ENCODE measurements at regions of chr3 and their contacts with region 1.

Region 1: DNA sequence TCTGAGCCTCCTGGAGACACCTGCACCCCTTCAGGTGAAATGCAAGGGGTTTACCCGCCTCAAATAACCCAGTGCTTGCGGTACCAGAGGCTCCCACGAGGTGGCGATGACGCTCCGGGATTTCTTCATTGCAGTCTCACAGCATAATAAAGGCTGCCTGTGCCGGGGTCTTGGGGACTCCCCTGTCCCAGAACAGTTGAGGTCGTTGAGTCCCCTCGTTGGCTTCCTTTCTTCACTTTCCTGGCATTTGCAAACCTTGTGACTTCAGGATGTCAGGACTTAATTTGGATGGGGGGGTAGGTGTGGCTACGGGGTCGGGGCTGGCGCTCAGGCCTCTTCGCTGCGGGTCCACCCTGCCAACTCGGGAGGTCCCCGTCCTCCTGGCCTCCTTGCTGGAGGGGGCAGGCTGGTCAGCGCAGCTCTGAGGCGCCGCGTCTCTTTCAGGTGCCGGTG is 1.3 kb downstream of the GNAT1 start:
- DNase-seq: peak; percentile 60
- H3K4me3 ChIP-seq: no peak overlapping the region
- H3K27ac ChIP-seq: no peak overlapping the region
- H3K4me1 ChIP-seq: peaks cover 27% of the 10 kb centered on the region
- H3K27me3 ChIP-seq: peaks cover 51% of the 10 kb centered on the region
- CTCF ChIP-seq: peak; percentile 91

Region 2: GRCh38 chr3:50068134-50068533 is 124.6 kb before region 1 on chr3:
- intact Hi-C with region 1: no loop called
- DNase-seq: no peak
- H3K4me3 ChIP-seq: no peak overlapping the region
- H3K27ac ChIP-seq: no peak overlapping the region
- H3K4me1 ChIP-seq: no peaks in the 10 kb centered on the region
- H3K27me3 ChIP-seq: no peaks in the 10 kb centered on the region
- CTCF ChIP-seq: no peak

Region 3: GRCh38 chr3:50121416-50122032 is 71.2 kb before region 1 on chr3:
- intact Hi-C with region 1: loop called (anchors 1 kb)
- DNase-seq: peak; percentile 70
- H3K4me3 ChIP-seq: no peak overlapping the region
- H3K27ac ChIP-seq: no peak overlapping the region
- H3K4me1 ChIP-seq: peaks cover 24% of the 10 kb centered on the region
- H3K27me3 ChIP-seq: no peaks in the 10 kb centered on the region
- CTCF ChIP-seq: peak; percentile 84

Region 4: GRCh38 chr3:50132421-50133282 is 60.1 kb before region 1 on chr3:
- intact Hi-C with region 1: no loop called
- DNase-seq: no peak
- H3K4me3 ChIP-seq: no peak overlapping the region
- H3K27ac ChIP-seq: no peak overlapping the region
- H3K4me1 ChIP-seq: peaks cover 11% of the 10 kb centered on the region
- H3K27me3 ChIP-seq: no peaks in the 10 kb centered on the region
- CTCF ChIP-seq: no peak

Region 5: GRCh38 chr3:50272911-50273693 is 80.4 kb after region 1 on chr3:
- intact Hi-C with region 1: loop called (anchors 10 kb)
- DNase-seq: peak; percentile 85
- H3K4me3 ChIP-seq: peak overlapping the region; percentile 55
- H3K27ac ChIP-seq: peak overlapping the region; percentile 12
- H3K4me1 ChIP-seq: peaks cover 57% of the 10 kb centered on the region
- H3K27me3 ChIP-seq: peaks cover 31% of the 10 kb centered on the region
- CTCF ChIP-seq: peak; percentile 97

Region 6: DNA sequence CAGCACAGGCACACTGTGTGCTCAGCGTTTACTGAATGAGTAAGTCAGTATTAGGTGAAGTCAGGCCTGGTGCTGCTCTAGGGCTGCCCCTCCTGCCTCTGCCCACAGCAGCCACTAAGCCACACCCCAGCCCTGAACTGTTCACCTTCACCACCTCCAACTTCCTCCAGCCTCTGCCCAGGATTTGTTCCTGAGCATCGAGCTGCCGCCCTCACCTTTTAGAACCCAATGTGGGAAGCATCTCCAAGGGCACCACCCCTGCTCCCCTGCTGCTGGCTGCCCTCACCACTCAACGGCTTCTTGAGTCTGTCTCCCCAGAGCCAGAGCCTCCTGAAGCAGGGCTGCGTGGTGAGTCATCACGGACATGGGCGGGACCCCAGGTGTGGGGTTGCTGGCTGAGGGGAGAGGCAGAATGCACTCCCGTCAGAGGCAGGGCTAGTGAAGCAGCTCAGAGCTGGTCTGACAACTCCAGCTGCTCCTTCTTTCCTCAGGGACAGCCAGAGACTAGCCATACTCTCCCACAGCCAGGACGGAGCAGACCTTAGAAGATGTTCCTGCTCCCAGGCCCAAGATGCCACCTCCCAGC is 124.0 kb after region 1 on chr3:
- intact Hi-C with region 1: no loop called
- DNase-seq: no peak
- H3K4me3 ChIP-seq: peak overlapping the region; percentile 86
- H3K27ac ChIP-seq: peak overlapping the region; percentile 99
- H3K4me1 ChIP-seq: peaks cover 78% of the 10 kb centered on the region
- H3K27me3 ChIP-seq: no peaks in the 10 kb centered on the region
- CTCF ChIP-seq: no peak